RWPE1 (cell line): ENCODE measurements at regions of chr5 and their contacts with region 1.

Region 1: DNA sequence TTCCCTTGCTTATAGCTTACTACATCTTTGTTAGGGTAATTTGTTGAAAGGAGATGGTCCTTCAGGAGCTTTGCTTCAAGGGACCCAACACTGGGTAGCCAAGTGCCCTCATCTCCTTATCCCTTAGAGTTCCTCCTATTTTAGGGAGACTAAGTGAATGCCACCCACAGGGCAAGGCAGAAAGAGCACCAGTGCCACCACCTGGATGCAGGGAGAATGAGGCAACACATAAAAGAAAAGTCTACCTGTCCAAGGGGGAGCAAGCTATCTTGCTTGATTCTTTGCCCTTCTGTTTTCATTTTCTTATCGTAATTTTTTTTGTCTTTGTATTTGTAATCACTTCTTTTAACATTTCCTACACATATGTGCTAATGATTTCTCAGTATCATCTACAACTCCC is 205.5 kb downstream of the NPR3 start:
- DNase-seq: peak; percentile 44
- H3K27ac ChIP-seq: no peak overlapping the region
- CTCF ChIP-seq: peak; percentile 44

Region 2: GRCh38 chr5:32709781-32710549 is 206.7 kb before region 1 on chr5:
- CTCF ChIA-PET with region 1: interaction called, 16 read pairs
- POLR2A ChIA-PET with region 1: no interaction called
- DNase-seq: peak; percentile 70
- H3K27ac ChIP-seq: peak overlapping the region; percentile 78
- CTCF ChIP-seq: peak; percentile 92

Region 3: GRCh38 chr5:32852535-32852934 is 64.1 kb before region 1 on chr5:
- CTCF ChIA-PET with region 1: interaction called, 3 read pairs
- POLR2A ChIA-PET with region 1: interaction called, 14 read pairs
- DNase-seq: no peak
- H3K27ac ChIP-seq: no peak overlapping the region
- CTCF ChIP-seq: no peak